AG04449 (cell line): ENCODE measurements at regions of chr2 and their contacts with region 1.

Region 1: GRCh38 chr2:100041981-100042380 is 100.4 kb downstream of the AFF3 start:
- DNase-seq: no peak
- H3K4me3 ChIP-seq: no peak overlapping the region
- CTCF ChIP-seq: no peak

Region 2: GRCh38 chr2:100052650-100053049 is 10.7 kb after region 1 on chr2:
- CTCF ChIA-PET with region 1: interaction called, 17 read pairs
- POLR2A ChIA-PET with region 1: no interaction called
- DNase-seq: no peak
- H3K4me3 ChIP-seq: no peak overlapping the region
- CTCF ChIP-seq: no peak

Region 3: DNA sequence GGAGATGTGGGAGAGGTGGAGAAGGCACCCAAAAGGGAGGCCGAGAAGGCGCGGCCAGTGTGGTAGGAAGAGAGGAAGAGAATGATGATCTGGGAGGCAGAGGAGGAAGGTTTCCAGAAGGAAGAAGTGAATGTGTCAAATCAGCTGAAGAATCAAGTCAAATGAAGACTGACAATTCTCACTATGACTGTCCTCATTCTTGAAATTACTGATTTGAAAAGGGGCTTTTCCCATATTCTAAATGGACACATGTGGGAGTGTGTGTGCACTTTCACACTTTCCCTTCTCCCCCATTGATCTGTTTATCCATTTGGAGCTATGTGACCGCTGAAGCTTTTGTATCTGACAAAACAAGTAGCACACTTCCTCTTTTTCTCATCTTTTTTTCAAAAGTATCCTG is 94.3 kb after region 1 on chr2:
- CTCF ChIA-PET with region 1: no interaction called
- POLR2A ChIA-PET with region 1: no interaction called
- DNase-seq: no peak
- H3K4me3 ChIP-seq: no peak overlapping the region
- CTCF ChIP-seq: no peak

Region 4: GRCh38 chr2:100381240-100381639 is 339.3 kb after region 1 on chr2:
- CTCF ChIA-PET with region 1: no interaction called
- POLR2A ChIA-PET with region 1: no interaction called
- DNase-seq: peak; percentile 14
- H3K4me3 ChIP-seq: no peak overlapping the region
- CTCF ChIP-seq: peak; percentile 85